PC-9 (cell line): ENCODE measurements at regions of chr18 and their contacts with region 1.

Region 1: GRCh38 chr18:79354350-79354749 is 41.4 kb upstream of the NFATC1 start:
- DNase-seq: no peak
- H3K4me3 ChIP-seq: no peak overlapping the region
- H3K27ac ChIP-seq: no peak overlapping the region
- H3K4me1 ChIP-seq: no peaks in the 10 kb centered on the region
- H3K27me3 ChIP-seq: no peaks in the 10 kb centered on the region
- CTCF ChIP-seq: no peak

Region 2: GRCh38 chr18:79169958-79170555 is 184.3 kb before region 1 on chr18:
- CTCF ChIA-PET with region 1: interaction called, 12 read pairs
- POLR2A ChIA-PET with region 1: no interaction called
- intact Hi-C with region 1: no loop called
- DNase-seq: no peak
- H3K4me3 ChIP-seq: no peak overlapping the region
- H3K27ac ChIP-seq: no peak overlapping the region
- H3K4me1 ChIP-seq: no peaks in the 10 kb centered on the region
- H3K27me3 ChIP-seq: no peaks in the 10 kb centered on the region
- CTCF ChIP-seq: no peak

Region 3: DNA sequence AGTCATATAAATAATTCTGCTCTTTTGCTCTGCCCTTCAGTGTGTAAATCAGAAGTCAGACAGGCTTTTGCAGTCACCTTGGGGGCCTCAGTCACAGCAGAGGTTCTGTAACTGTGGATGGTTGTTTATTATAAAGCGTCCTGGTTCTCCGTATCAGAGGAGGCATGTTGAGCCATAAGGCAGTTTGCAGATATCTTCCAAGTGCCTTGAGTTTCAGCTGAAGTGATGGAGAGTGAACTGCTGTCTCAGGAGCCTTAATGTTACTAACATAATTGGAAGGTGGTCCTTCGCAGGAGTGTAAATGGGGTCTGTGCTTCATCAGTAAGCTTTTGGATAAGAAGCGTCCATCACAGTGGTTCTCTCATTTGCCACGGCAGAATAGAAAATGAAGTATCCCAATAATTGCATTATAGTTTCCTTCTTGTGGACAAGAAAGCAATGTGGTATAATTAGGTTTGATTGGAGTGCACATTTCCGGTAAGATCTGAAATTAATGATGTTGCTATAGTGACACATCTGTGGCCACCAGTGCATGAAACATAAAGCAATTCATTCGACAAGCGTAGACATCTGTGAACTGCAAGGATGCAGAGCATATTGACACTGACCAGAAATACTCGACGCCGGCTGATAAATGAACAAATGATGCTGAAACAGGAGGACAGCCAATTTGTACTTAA is 71.1 kb before region 1 on chr18:
- CTCF ChIA-PET with region 1: no interaction called
- POLR2A ChIA-PET with region 1: no interaction called
- intact Hi-C with region 1: no loop called
- DNase-seq: no peak
- H3K4me3 ChIP-seq: no peak overlapping the region
- H3K27ac ChIP-seq: no peak overlapping the region
- H3K4me1 ChIP-seq: no peaks in the 10 kb centered on the region
- H3K27me3 ChIP-seq: no peaks in the 10 kb centered on the region
- CTCF ChIP-seq: no peak

Region 4: GRCh38 chr18:79528846-79529245 is 174.5 kb after region 1 on chr18:
- CTCF ChIA-PET with region 1: no interaction called
- POLR2A ChIA-PET with region 1: no interaction called
- intact Hi-C with region 1: no loop called
- DNase-seq: peak; percentile 43 to 60
- H3K4me3 ChIP-seq: no peak overlapping the region
- H3K27ac ChIP-seq: no peak overlapping the region
- H3K4me1 ChIP-seq: no peaks in the 10 kb centered on the region
- H3K27me3 ChIP-seq: peaks cover 66% of the 10 kb centered on the region
- CTCF ChIP-seq: peak; percentile 86